CD4-positive, alpha-beta memory T cell (primary cell): ENCODE measurements at regions of chr1 and their contacts with region 1.

Region 1: DNA sequence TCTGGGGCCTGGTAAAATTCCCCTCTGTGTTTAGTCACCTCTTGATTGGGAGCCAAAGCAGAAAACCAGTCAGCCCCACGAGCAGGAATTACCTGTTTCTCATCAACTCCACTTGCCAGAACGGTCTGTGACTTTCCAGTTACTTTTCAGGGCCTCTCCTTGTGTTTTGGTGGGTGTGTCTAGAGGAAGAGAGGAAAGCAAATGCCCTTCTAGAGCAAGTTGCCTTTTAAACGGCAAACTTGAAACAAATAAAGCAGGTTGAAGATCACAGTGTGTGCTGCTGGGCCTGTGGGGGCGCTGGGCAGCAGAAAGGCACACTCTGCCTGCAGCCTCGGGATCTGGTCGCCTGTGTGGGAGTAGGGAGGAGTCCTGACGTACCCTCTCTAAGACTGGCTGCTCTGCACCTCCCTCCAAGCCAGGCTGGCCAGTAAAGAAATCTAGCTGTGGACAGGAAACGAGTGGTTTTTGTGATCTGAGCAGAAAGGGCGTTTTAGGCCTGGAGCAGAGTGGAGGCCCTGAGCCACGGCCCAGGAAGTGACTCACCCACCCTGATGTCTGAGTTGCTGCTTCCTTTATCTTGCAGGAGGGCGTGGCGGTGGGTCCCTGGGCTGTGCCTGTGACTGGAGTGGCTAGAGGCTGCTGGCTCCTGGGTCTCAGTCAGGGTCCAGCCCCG is 11.1 kb upstream of the S100A11 start:
- DNase-seq: peak; percentile 81 to 96 (median 83)
- H3K4me3 ChIP-seq: peak overlapping the region; percentile 12 to 27
- H3K4me3 Mint-ChIP-seq: peak overlapping the region; percentile 58 to 91 (median 82)
- H3K27ac ChIP-seq: peak overlapping the region; percentile 83
- H3K27ac Mint-ChIP-seq: peak overlapping the region; percentile 95 to 99 (median 99)
- H3K4me1 ChIP-seq: peaks cover 31% of the 10 kb centered on the region
- H3K4me1 Mint-ChIP-seq: peaks cover 19 to 44% (median 33%) of the 10 kb centered on the region in 4 donors
- H3K27me3 ChIP-seq: no peaks in the 10 kb centered on the region
- H3K27me3 Mint-ChIP-seq: peaks cover 0 to 2% of the 10 kb centered on the region in 2 donors

Region 2: DNA sequence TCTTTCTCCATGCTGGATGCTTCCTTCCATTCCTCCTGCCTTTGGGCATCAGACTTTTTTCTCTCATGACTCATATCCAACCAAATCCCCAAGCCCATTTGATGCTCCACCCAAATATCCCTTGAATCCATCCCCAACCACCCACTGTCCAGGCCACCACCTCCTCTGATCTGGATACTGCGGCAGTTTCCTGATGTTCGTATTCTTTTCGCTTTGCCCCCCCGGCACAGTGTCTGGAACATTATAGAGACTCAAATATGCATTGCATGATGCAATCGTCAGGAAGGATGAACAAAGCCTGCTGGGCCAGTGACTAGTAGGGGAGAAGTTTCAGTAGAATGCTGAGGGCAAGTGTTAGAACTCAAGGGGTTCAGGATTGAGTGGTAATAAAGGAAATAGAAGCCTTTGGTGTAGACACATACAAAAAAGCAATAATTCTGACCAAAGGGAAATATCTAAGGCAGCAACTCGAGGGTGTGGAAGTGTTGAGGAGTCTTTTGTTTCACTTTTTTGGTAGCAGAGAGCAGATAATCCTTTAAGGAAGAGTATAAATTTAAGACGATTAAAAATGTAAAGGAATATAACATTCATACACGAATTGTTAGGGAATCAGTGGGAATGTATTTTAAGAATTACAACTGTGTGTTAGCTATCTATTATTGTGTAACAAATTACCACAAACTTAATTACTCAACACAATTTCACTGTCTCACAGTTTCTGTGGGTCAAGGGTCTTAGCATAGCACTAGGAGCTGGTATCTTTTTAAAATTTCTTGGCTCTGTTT is 18.5 kb before region 1 on chr1:
- CTCF ChIA-PET with region 1: interaction called, 111 read pairs
- POLR2A ChIA-PET with region 1: interaction called, 207 read pairs
- intact Hi-C with region 1: no loop called
- DNase-seq: no peak
- H3K4me3 ChIP-seq: no peak overlapping the region
- H3K4me3 Mint-ChIP-seq: peak overlapping the region in 2 of 8 donors; percentile 3 to 9
- H3K27ac ChIP-seq: no peak overlapping the region
- H3K27ac Mint-ChIP-seq: peak overlapping the region; percentile 57 to 92 (median 85)
- H3K4me1 ChIP-seq: peaks cover 31% of the 10 kb centered on the region
- H3K4me1 Mint-ChIP-seq: peaks cover 33 to 59% (median 40%) of the 10 kb centered on the region in 4 donors
- H3K27me3 ChIP-seq: no peaks in the 10 kb centered on the region
- H3K27me3 Mint-ChIP-seq: peaks cover 0 to 2% of the 10 kb centered on the region in 2 donors

Region 3: GRCh38 chr1:152034646-152035405 is 13.0 kb before region 1 on chr1:
- CTCF ChIA-PET with region 1: interaction called, 111 read pairs
- POLR2A ChIA-PET with region 1: interaction called, 207 read pairs
- intact Hi-C with region 1: loop called (anchors 1 kb)
- DNase-seq: peak; percentile 75 to 87 (median 80)
- H3K4me3 ChIP-seq: peak overlapping the region; percentile 73 to 77
- H3K4me3 Mint-ChIP-seq: peak overlapping the region; percentile 91 to 100 (median 100)
- H3K27ac ChIP-seq: peak overlapping the region; percentile 88
- H3K27ac Mint-ChIP-seq: peak overlapping the region; percentile 97 to 100 (median 99)
- H3K4me1 ChIP-seq: peaks cover 38% of the 10 kb centered on the region
- H3K4me1 Mint-ChIP-seq: peaks cover 23 to 54% (median 43%) of the 10 kb centered on the region in 4 donors
- H3K27me3 ChIP-seq: no peaks in the 10 kb centered on the region
- H3K27me3 Mint-ChIP-seq: no peaks in the 10 kb centered on the region

Region 4: GRCh38 chr1:152110860-152111514 is 63.1 kb after region 1 on chr1:
- CTCF ChIA-PET with region 1: interaction called, 8 read pairs
- POLR2A ChIA-PET with region 1: no interaction called
- intact Hi-C with region 1: loop called (anchors 10 kb)
- DNase-seq: peak; percentile 21 to 39 (median 25)
- H3K4me3 ChIP-seq: peak overlapping the region; percentile 47 to 59
- H3K4me3 Mint-ChIP-seq: no peak overlapping the region
- H3K27ac ChIP-seq: no peak overlapping the region
- H3K27ac Mint-ChIP-seq: no peak overlapping the region
- H3K4me1 ChIP-seq: peaks cover 47% of the 10 kb centered on the region
- H3K4me1 Mint-ChIP-seq: peaks cover 0 to 13% (median 9%) of the 10 kb centered on the region in 4 donors
- H3K27me3 ChIP-seq: peaks cover 51% of the 10 kb centered on the region
- H3K27me3 Mint-ChIP-seq: peaks cover 11 to 35% of the 10 kb centered on the region in 2 donors

Region 5: DNA sequence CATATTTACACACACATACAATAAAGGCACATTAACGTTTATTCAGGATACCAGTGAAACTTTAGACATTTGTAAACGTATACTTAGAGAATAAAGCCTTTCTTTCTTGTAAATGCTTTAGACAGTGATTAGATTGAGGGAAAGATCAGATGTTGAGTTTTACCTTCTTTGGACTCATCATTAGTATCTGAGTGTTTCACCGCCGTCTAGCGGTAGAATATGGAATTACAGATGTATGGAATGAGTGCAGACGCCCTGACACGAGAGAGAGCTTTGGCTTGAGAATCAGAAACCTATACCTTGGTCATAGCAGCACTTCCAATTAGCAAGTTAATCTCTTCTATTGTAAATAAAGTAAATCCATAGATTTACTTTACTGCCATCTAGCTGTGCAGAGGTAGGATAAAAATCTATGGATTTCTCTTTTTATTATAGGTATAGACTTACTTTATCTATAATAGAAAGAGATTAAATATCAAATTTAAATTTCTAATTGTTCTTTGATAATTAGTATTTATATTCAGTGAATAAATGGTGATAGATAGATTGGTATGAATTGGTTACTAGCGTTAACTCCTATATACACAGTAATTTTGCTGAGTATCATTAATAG is 299.4 kb after region 1 on chr1:
- CTCF ChIA-PET with region 1: no interaction called
- POLR2A ChIA-PET with region 1: no interaction called
- intact Hi-C with region 1: loop called (anchors 5 kb)
- DNase-seq: peak; percentile 55 to 67 (median 60)
- H3K4me3 ChIP-seq: no peak overlapping the region
- H3K4me3 Mint-ChIP-seq: no peak overlapping the region
- H3K27ac ChIP-seq: no peak overlapping the region
- H3K27ac Mint-ChIP-seq: no peak overlapping the region
- H3K4me1 ChIP-seq: no peaks in the 10 kb centered on the region
- H3K4me1 Mint-ChIP-seq: peaks cover 0 to 2% (median under 1%) of the 10 kb centered on the region in 4 donors
- H3K27me3 ChIP-seq: no peaks in the 10 kb centered on the region
- H3K27me3 Mint-ChIP-seq: peaks cover 7 to 9% of the 10 kb centered on the region in 2 donors

Region 6: DNA sequence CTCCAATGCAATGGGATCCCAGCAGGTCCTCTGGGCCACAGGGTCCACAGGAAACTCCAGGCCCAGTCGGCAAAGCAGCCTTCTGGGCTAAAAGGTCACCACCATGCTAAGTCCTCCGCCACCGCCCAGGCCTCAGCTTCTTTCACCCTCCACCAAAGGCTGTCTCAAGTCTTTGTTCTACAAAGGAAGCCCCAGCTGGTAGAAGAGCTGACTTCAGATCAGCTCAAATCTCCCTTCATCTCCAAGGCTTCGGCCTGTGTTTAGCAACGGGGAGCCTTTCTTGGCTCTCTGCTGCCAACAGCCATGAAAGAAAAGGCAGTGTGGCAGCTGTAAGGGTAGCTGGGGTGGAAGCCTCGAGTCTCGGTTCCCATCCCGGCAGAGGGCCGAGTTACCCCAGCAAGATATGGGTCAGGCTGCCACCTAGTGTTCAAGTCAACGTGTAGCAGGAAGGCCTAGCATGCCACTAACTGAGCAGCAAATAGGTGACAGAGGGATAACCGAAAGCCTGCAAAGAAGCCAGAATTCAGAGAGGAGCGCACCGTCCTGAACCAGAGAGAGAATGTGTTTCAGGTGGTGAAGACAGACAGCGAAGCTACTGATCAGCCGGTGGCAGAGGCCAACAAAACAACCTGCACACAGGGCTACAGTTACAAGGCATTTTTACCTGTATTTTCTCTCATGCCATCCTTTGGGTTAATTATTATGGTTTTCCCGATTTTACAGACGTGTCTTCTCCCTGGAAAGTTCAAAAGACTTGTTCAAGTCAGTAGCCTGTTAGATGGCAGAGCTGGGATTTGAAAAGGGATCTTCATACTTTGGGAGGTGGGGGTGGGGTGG is 393.0 kb after region 1 on chr1:
- CTCF ChIA-PET with region 1: interaction called, 11 read pairs
- POLR2A ChIA-PET with region 1: no interaction called
- intact Hi-C with region 1: loop called (anchors 1 kb)
- DNase-seq: peak; percentile 74 to 77 (median 75)
- H3K4me3 ChIP-seq: no peak overlapping the region
- H3K4me3 Mint-ChIP-seq: peak overlapping the region in 1 of 8 donors; percentile 56
- H3K27ac ChIP-seq: no peak overlapping the region
- H3K27ac Mint-ChIP-seq: peak overlapping the region in 2 of 7 donors; percentile 44 to 68
- H3K4me1 ChIP-seq: no peaks in the 10 kb centered on the region
- H3K4me1 Mint-ChIP-seq: peaks cover 4 to 14% (median 8%) of the 10 kb centered on the region in 4 donors
- H3K27me3 ChIP-seq: no peaks in the 10 kb centered on the region
- H3K27me3 Mint-ChIP-seq: peaks cover 19 to 22% of the 10 kb centered on the region in 2 donors